GM12878 (cell line): ENCODE measurements at regions of chr1 and their contacts with region 1.

Region 1: GRCh38 chr1:110148961-110149360 is 1.3 kb upstream of the SLC6A17 start:
- DNase-seq: no peak
- ATAC-seq: 0 out of 3 replicates have a peak, but pooled peaks have one; percentile 25
- H3K4me3 ChIP-seq: no peak overlapping the region
- H3K27ac ChIP-seq: no peak overlapping the region
- H3K4me1 ChIP-seq: no peaks in the 10 kb centered on the region
- H3K27me3 ChIP-seq: peaks cover 7 to 12% of the 10 kb centered on the region in 2 experiments; a peak in 3 of 4 replicates
- CTCF ChIP-seq: peak; percentile 14 to 34 (median 29); a peak in 3 of 6 replicates
- EP300 ChIP-seq: no peak
- POLR2A ChIP-seq: no peak
- RAD21 ChIP-seq: no peak

Region 2: DNA sequence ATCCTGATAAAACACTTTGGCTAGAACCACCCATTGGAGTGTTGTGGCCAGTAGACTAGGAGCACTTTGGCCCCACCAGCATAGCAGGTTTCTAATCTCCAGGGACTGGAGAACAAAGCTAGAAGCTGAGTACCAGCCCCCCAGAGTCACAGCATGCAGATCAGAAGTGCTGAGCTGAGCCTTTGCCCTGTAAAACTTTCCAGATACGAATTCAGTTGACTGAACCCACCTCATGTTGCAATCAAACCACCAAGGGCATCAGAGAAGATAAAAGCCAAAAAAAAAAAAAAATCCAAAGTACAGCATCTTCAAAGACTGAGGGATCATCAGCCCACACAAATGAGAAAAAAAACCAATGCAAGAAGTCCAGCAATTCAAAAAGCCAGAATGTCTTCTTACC is 715.3 kb after region 1 on chr1:
- CTCF ChIA-PET with region 1: no interaction called
- POLR2A ChIA-PET with region 1: no interaction called
- RAD21 ChIA-PET with region 1: no interaction called
- SMC1A ChIA-PET with region 1: no interaction called
- in situ Hi-C with region 1: no loop called
- intact Hi-C with region 1: loop called (anchors 10 kb)
- DNase-seq: no peak
- ATAC-seq: no peak
- H3K4me3 ChIP-seq: no peak overlapping the region
- H3K27ac ChIP-seq: no peak overlapping the region
- H3K4me1 ChIP-seq: no peaks in the 10 kb centered on the region
- H3K27me3 ChIP-seq: no peaks in the 10 kb centered on the region
- CTCF ChIP-seq: no peak
- EP300 ChIP-seq: no peak
- POLR2A ChIP-seq: no peak
- RAD21 ChIP-seq: no peak